Transverse colon (tissue), 4 donors: ENCODE measurements at regions of chr20 and their contacts with region 1.

Region 1: DNA sequence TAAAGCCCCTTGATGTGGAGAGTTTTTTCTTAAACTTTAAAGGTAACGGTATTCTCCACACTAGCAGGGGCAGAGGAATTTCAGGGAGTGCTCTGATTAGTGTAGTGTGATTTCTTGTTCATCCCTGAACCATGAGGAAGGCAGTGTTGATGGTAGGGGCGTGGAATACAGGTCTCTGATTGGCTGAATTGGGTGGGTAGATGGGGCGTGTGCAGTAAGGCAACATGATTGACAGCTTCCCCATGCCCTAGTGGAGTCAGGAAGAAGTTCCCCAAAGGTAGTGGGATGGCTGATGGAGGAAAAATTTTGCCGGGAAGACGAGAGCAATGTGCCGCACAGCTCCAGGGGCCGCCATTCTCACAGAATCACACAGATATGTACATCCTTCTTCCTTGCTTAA is 97.3 kb upstream of the SALL4 start:
- DNase-seq: no peak
- H3K4me3 ChIP-seq: no peak overlapping the region
- H3K27ac ChIP-seq: no peak overlapping the region
- H3K4me1 ChIP-seq: no peaks in the 10 kb centered on the region
- H3K27me3 ChIP-seq: no peaks in the 10 kb centered on the region
- CTCF ChIP-seq: no peak
- EP300 ChIP-seq: no peak
- POLR2A ChIP-seq: no peak

Region 2: GRCh38 chr20:51943761-51944160 is 44.1 kb after region 1 on chr20:
- in situ Hi-C with region 1: no loop called
- intact Hi-C with region 1: loop called (anchors 1 kb)
- DNase-seq: no peak
- H3K4me3 ChIP-seq: no peak overlapping the region
- H3K27ac ChIP-seq: no peak overlapping the region
- H3K4me1 ChIP-seq: no peaks in the 10 kb centered on the region
- H3K27me3 ChIP-seq: no peaks in the 10 kb centered on the region
- CTCF ChIP-seq: no peak
- EP300 ChIP-seq: no peak
- POLR2A ChIP-seq: no peak

Region 3: DNA sequence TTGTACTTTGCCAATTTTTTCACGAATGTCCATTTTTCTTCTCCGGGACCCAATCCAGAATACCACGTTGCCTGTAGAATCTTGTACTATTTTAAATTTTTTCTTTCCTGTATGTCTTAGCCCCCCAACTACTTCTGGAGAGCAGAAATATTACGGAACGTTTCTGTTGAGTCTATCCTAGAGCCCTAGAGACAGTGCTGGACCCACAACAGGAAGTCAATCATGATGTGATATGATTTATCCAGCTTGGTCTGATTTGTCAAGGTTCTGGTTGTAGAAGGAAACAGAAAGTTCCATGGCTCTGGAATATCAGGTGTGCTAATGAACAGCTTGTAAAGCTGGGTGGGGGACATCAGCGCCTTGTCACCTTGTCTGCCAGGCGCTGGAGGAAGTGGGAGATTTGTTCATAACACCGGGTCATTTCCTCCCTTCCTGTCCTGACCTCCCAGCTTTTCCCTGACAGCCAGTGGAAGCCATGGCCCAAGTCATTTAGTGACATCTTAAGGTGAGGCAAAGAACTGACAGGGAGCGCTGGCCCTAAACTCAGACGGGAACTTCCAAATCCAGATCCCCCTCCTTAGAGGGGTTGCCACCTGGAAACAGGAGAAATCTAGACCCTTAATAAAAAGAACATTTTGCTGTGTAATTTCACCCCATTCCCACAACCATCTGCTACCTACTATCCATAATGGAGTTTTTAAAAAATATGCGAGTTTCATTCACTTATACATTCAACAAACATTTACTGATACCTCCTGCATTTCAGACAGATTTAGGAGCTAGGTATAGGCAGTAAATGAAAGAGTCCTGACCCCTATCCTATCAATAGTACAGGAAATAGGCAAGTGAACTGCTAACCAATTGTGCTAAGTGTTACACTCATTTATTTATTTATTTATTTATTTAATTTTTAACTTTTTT is 161.4 kb after region 1 on chr20:
- in situ Hi-C with region 1: no loop called
- intact Hi-C with region 1: no loop called
- DNase-seq: no peak
- H3K4me3 ChIP-seq: no peak overlapping the region
- H3K27ac ChIP-seq: no peak overlapping the region
- H3K4me1 ChIP-seq: peaks cover 0 to 4% (median 0%) of the 10 kb centered on the region in 4 donors
- H3K27me3 ChIP-seq: no peaks in the 10 kb centered on the region
- CTCF ChIP-seq: peak in 3 of 5 experiments; percentile 21 to 30 (median 27)
- EP300 ChIP-seq: no peak
- POLR2A ChIP-seq: no peak